HCT116 (cell line): ENCODE measurements at regions of chrX and their contacts with region 1.

Region 1: GRCh38 chrX:129931411-129932015 is 25.5 kb downstream of the UTP14A start:
- DNase-seq: peak; percentile 79
- ATAC-seq: peak; percentile 78
- H3K4me3 ChIP-seq: peak overlapping the region; percentile 51 to 59
- H3K27ac ChIP-seq: peak overlapping the region; percentile 77
- H3K4me1 ChIP-seq: peaks cover 0 to 6% of the 10 kb centered on the region in 2 experiments; a peak in 1 of 4 replicates
- H3K27me3 ChIP-seq: no peaks in the 10 kb centered on the region
- CTCF ChIP-seq: no peak
- POLR2A ChIP-seq: no peak
- RAD21 ChIP-seq: no peak

Region 2: GRCh38 chrX:129982274-129983251 is 51.0 kb after region 1 on chrX and contains the start of gene BCORL1:
- CTCF ChIA-PET with region 1: no interaction called
- POLR2A ChIA-PET with region 1: no interaction called
- RAD21 ChIA-PET with region 1: no interaction called
- intact Hi-C with region 1: loop called (anchors 2 kb)
- DNase-seq: peak; percentile 79
- ATAC-seq: peak; percentile 86
- H3K4me3 ChIP-seq: peak within 1 kb of the TSS in 1 of 2 experiments; percentile 41; a peak in 2 of 4 replicates
- H3K27ac ChIP-seq: peak within 1 kb of the TSS; percentile 34; the same call in 1 of the 2 replicates
- H3K4me1 ChIP-seq: peaks cover 0 to 7% of the 10 kb centered on the region in 2 experiments; a peak in 1 of 4 replicates
- H3K27me3 ChIP-seq: no peaks in the 10 kb centered on the region
- CTCF ChIP-seq: no peak
- POLR2A ChIP-seq: peak; percentile 73
- RAD21 ChIP-seq: no peak
- total RNA-seq, gene BCORL1: 30.8 TPM

Region 3: DNA sequence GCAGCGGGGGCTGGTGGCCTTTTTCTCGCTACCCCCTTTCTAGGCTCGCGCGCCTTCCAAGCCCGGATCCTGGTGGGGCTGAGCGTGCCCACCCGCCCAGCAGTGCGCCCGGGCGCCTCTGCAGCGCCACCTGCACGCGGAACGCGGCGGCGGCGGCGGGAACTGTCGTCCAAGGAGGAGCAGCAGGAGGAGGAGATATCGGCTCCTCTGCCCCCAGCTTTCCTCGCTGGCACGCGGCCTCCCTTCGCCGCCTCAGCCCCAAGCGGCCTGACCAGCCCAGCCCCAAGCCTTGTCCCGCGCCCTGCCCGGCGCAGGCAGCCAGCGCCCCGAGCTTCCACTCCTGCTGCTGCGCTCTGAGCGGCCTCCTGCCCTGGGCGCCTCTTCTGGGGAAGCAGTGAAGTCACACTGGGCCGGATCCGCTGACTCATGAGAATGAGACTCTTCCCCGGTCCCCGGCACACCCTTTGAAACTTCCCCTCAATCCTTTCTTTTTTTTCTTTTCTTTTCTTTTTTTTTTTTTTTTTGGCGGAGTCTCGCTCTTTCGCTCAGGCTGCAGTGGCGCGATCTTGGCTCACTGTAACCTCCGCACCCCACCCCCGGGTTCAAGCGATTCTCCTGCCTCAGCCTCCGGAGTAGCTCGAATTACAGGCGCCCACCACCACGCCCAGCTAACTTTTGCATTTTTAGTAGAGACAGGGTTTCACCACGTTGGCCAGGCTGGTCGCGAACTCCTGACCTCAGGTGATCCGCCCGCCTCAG is 189.4 kb after region 1 on chrX:
- CTCF ChIA-PET with region 1: no interaction called
- POLR2A ChIA-PET with region 1: no interaction called
- RAD21 ChIA-PET with region 1: no interaction called
- intact Hi-C with region 1: no loop called
- DNase-seq: no peak
- ATAC-seq: peak; percentile 87
- H3K4me3 ChIP-seq: peak overlapping the region; percentile 26 to 47
- H3K27ac ChIP-seq: peak overlapping the region; percentile 69
- H3K4me1 ChIP-seq: peaks cover 23 to 43% of the 10 kb centered on the region in 2 experiments
- H3K27me3 ChIP-seq: no peaks in the 10 kb centered on the region
- CTCF ChIP-seq: peak in 2 of 3 experiments; percentile 53 to 64; a peak in 4 of 6 replicates
- POLR2A ChIP-seq: no peak
- RAD21 ChIP-seq: no peak